ENCODE measurements at regions of chr9 and their contacts with region 1.

Region 1: GRCh38 chr9:129487642-129488409 is 133.1 kb downstream of the C9orf50 start:
- DNase-seq: peak in 13 of 14 experiments; percentile 34 to 79 (median 47)
- ATAC-seq: peak; percentile 13
- H3K4me3 ChIP-seq: peak overlapping the region; percentile 56
- H3K4me3 Mint-ChIP-seq: peak overlapping the region; percentile 83
- H3K27ac ChIP-seq: peak overlapping the region; percentile 77 to 87
- H3K27ac Mint-ChIP-seq: peak overlapping the region; percentile 94
- H3K4me1 ChIP-seq: peaks cover 83% of the 10 kb centered on the region
- H3K4me1 Mint-ChIP-seq: peaks cover 63% of the 10 kb centered on the region
- H3K27me3 ChIP-seq: no peaks in the 10 kb centered on the region
- H3K27me3 Mint-ChIP-seq: peaks cover 5% of the 10 kb centered on the region
- CTCF ChIP-seq: no peak

Region 2: DNA sequence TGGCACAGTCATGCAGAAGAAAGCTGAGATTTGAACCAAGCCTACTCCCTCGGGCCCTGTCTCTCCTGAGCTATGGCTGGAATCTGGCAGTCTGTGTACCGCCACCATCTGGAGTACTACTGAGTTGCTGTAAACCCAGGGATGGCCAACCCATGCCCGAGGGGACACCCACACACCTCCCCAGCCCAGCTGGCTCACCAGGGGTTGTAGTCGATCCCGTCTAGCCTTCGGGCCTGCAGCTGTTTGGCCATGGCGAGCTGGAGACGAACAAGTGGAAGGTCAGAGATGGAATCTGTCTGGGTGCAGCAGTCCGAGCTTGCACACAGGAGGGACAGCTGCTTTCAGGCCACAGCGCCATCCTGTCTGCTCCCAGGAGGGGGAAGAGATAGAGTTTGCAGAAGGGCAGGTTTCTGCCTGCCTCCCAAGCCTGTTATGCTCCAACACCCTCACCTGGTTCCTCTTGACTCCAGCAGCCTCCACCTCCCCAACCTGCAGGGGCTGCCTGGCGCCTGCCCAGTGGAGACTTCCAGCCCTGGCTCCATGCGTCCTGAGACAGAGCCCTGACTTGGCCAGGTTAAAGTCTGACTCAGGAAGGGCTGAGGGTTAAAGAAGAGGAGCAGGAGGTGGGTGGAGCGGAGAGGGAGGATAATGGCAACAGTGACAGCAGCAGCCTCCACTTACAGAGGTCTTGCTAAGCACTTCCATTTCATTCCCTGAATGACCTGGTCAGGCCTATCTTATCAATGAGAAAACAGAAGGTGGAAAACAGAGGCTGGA is 642.5 kb before region 1 on chr9:
- CTCF ChIA-PET with region 1: no interaction called
- POLR2A ChIA-PET with region 1: no interaction called
- intact Hi-C with region 1: no loop called
- DNase-seq: no peak
- ATAC-seq: no peak
- H3K4me3 ChIP-seq: no peak overlapping the region
- H3K4me3 Mint-ChIP-seq: no peak overlapping the region
- H3K27ac ChIP-seq: no peak overlapping the region
- H3K27ac Mint-ChIP-seq: no peak overlapping the region
- H3K4me1 ChIP-seq: no peaks in the 10 kb centered on the region
- H3K4me1 Mint-ChIP-seq: no peaks in the 10 kb centered on the region
- H3K27me3 ChIP-seq: no peaks in the 10 kb centered on the region
- H3K27me3 Mint-ChIP-seq: no peaks in the 10 kb centered on the region
- CTCF ChIP-seq: no peak

Region 3: GRCh38 chr9:129258124-129258822 is 229.6 kb before region 1 on chr9:
- CTCF ChIA-PET with region 1: no interaction called
- POLR2A ChIA-PET with region 1: no interaction called
- intact Hi-C with region 1: no loop called
- DNase-seq: peak; percentile 77 to 97 (median 87)
- ATAC-seq: peak; percentile 89
- H3K4me3 ChIP-seq: peak overlapping the region; percentile 51
- H3K4me3 Mint-ChIP-seq: peak overlapping the region; percentile 80
- H3K27ac ChIP-seq: no peak overlapping the region
- H3K27ac Mint-ChIP-seq: no peak overlapping the region
- H3K4me1 ChIP-seq: peaks cover 34% of the 10 kb centered on the region
- H3K4me1 Mint-ChIP-seq: peaks cover 47% of the 10 kb centered on the region
- H3K27me3 ChIP-seq: peaks cover 0 to 3% of the 10 kb centered on the region in 2 experiments
- H3K27me3 Mint-ChIP-seq: no peaks in the 10 kb centered on the region
- CTCF ChIP-seq: no peak

Region 4: GRCh38 chr9:129383561-129384416 is 104.0 kb before region 1 on chr9:
- CTCF ChIA-PET with region 1: no interaction called
- POLR2A ChIA-PET with region 1: interaction called, 3 read pairs
- intact Hi-C with region 1: loop called in 1 of 2 experiments (anchors 5 kb)
- DNase-seq: peak; percentile 54 to 89 (median 73)
- ATAC-seq: peak; percentile 93
- H3K4me3 ChIP-seq: peak overlapping the region; percentile 66
- H3K4me3 Mint-ChIP-seq: peak overlapping the region; percentile 84
- H3K27ac ChIP-seq: peak overlapping the region; percentile 79 to 85
- H3K27ac Mint-ChIP-seq: peak overlapping the region; percentile 83
- H3K4me1 ChIP-seq: peaks cover 21% of the 10 kb centered on the region
- H3K4me1 Mint-ChIP-seq: peaks cover 10% of the 10 kb centered on the region
- H3K27me3 ChIP-seq: no peaks in the 10 kb centered on the region
- H3K27me3 Mint-ChIP-seq: no peaks in the 10 kb centered on the region
- CTCF ChIP-seq: no peak

Region 5: DNA sequence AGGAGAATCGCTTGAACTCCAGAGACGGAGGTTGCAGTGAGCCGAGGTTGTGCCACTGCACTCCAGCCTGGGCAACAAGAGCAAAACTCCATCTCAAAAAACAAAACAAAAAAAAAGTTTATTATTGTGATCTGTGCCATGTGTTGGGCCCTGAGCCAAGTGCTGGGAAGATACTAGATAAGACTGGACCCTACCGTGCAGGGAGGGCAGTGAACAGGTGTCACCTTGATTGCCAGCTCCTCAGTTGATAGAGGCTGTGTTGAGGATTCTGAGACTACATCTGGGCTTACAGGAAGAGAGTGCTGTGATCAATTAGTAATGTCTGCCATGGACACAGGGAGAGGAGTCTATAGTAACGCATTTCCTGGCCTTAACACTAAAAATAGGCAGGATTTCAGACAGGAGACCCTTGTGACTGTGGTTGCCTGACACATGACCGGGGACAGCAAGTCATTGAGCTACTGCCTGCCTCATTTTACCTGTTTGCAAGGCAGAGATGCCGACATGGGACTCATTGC is 68.4 kb before region 1 on chr9:
- CTCF ChIA-PET with region 1: no interaction called
- POLR2A ChIA-PET with region 1: no interaction called
- intact Hi-C with region 1: no loop called
- DNase-seq: no peak
- ATAC-seq: no peak
- H3K4me3 ChIP-seq: no peak overlapping the region
- H3K4me3 Mint-ChIP-seq: no peak overlapping the region
- H3K27ac ChIP-seq: no peak overlapping the region
- H3K27ac Mint-ChIP-seq: no peak overlapping the region
- H3K4me1 ChIP-seq: peaks cover 32% of the 10 kb centered on the region
- H3K4me1 Mint-ChIP-seq: peaks cover 17% of the 10 kb centered on the region
- H3K27me3 ChIP-seq: no peaks in the 10 kb centered on the region
- H3K27me3 Mint-ChIP-seq: no peaks in the 10 kb centered on the region
- CTCF ChIP-seq: no peak

Region 6: GRCh38 chr9:129536041-129536440 is 48.2 kb after region 1 on chr9:
- CTCF ChIA-PET with region 1: no interaction called
- POLR2A ChIA-PET with region 1: no interaction called
- intact Hi-C with region 1: no loop called
- DNase-seq: no peak
- ATAC-seq: no peak
- H3K4me3 ChIP-seq: no peak overlapping the region
- H3K4me3 Mint-ChIP-seq: no peak overlapping the region
- H3K27ac ChIP-seq: no peak overlapping the region
- H3K27ac Mint-ChIP-seq: no peak overlapping the region
- H3K4me1 ChIP-seq: no peaks in the 10 kb centered on the region
- H3K4me1 Mint-ChIP-seq: no peaks in the 10 kb centered on the region
- H3K27me3 ChIP-seq: no peaks in the 10 kb centered on the region
- H3K27me3 Mint-ChIP-seq: no peaks in the 10 kb centered on the region
- CTCF ChIP-seq: no peak